CD14-positive monocyte (primary cell): ENCODE measurements at regions of chr15 and their contacts with region 1.

Region 1: GRCh38 chr15:64209680-64210334 is 47.0 kb upstream of the PPIB start:
- DNase-seq: peak in 1 of 3 donors; percentile 2
- H3K4me3 ChIP-seq: no peak overlapping the region
- H3K4me3 Mint-ChIP-seq: no peak overlapping the region
- H3K27ac ChIP-seq: no peak overlapping the region
- H3K27ac Mint-ChIP-seq: no peak overlapping the region
- H3K4me1 ChIP-seq: no peaks in the 10 kb centered on the region
- H3K4me1 Mint-ChIP-seq: no peaks in the 10 kb centered on the region
- H3K27me3 ChIP-seq: no peaks in the 10 kb centered on the region
- H3K27me3 Mint-ChIP-seq: peaks cover 0 to 2% (median 0%) of the 10 kb centered on the region in 3 donors
- CTCF ChIP-seq: peak; percentile 48

Region 2: DNA sequence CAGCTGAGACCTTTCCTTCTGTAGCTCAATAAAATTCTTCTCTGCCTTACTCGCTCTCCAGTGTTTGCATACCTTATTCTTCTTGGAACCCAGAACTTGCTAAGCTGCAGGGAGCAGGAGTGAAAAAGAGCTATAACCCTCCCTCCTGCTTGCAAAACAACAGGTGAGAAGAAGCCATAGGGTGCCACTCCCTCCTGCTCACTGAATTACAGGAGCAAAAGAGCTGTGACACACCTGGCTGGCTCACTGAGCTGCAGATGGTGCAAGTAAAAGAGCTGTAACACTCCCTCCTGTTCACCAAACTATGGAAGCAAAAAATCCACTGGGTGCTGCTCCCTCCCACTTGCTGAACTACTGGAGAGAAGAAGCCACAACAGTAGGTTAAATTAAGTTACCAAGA is 2000.5 kb before region 1 on chr15:
- intact Hi-C with region 1: no loop called
- DNase-seq: no peak
- H3K4me3 ChIP-seq: no peak overlapping the region
- H3K4me3 Mint-ChIP-seq: no peak overlapping the region
- H3K27ac ChIP-seq: no peak overlapping the region
- H3K27ac Mint-ChIP-seq: no peak overlapping the region
- H3K4me1 ChIP-seq: no peaks in the 10 kb centered on the region
- H3K4me1 Mint-ChIP-seq: no peaks in the 10 kb centered on the region
- H3K27me3 ChIP-seq: no peaks in the 10 kb centered on the region
- H3K27me3 Mint-ChIP-seq: peaks cover 0 to 1% (median 0%) of the 10 kb centered on the region in 3 donors
- CTCF ChIP-seq: no peak

Region 3: DNA sequence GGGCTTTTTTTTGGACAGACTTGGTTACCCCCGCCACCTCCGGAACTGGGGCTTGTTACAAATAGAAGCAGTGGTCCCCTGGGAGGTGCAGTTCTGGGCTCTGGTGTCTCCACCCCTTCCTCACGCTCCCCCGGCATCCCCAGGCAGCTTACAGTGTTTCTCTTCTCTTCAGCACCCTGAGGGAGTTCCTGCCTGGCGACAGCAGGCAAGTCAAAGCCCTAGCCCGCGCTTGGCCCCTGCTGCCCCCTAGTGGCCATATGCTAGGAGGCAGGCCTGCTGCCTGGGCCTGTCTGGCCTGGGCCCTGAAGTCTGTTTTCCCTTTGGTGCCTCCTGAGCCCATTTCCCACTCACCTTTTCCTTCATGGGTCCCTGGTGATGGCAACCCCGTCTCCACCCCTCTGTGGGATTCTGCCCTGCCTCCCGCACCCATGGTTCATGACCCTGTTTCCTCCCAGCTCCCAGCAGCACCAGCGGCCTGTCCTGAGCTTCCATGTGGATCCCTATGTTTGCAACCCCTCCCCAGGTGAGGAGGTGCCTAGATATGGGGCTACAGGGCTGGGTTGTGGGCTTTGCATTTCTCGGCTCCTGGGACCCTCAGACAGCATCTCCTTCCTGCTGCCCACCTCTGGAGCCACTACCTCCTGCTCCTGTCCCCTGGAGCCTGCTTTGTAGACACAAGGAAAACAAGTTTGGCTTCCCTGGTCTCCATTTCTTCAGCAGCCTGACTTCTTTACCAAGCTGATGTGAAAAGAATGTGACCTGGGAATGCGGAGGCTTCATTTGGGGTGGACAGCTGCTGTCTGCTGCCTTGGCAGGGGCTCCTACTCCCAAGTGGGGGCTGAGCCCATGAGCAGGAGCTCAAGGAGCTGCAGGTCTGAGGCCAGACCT is 56.1 kb before region 1 on chr15:
- intact Hi-C with region 1: no loop called
- DNase-seq: peak; percentile 79 to 82 (median 81)
- H3K4me3 ChIP-seq: no peak overlapping the region
- H3K4me3 Mint-ChIP-seq: peak overlapping the region; percentile 58 to 83
- H3K27ac ChIP-seq: peak overlapping the region; percentile 28 to 36
- H3K27ac Mint-ChIP-seq: peak overlapping the region in 5 of 7 donors; percentile 13 to 81 (median 53)
- H3K4me1 ChIP-seq: peaks cover 40 to 49% of the 10 kb centered on the region in 2 donors
- H3K4me1 Mint-ChIP-seq: peaks cover 41% of the 10 kb centered on the region
- H3K27me3 ChIP-seq: peaks cover 17 to 25% of the 10 kb centered on the region in 2 donors
- H3K27me3 Mint-ChIP-seq: peaks cover 24 to 34% (median 29%) of the 10 kb centered on the region in 3 donors
- CTCF ChIP-seq: peak; percentile 95

Region 4: GRCh38 chr15:64355944-64356709 is 146.3 kb after region 1 on chr15 and contains the start of gene CSNK1G1:
- intact Hi-C with region 1: loop called in 1 of 2 experiments (anchors 10 kb)
- DNase-seq: peak; percentile 88 to 95 (median 92)
- H3K4me3 ChIP-seq: peak within 1 kb of the TSS; percentile 93 to 98 (median 95)
- H3K4me3 Mint-ChIP-seq: peak within 1 kb of the TSS; percentile 96 to 97
- H3K27ac ChIP-seq: peak within 1 kb of the TSS; percentile 34 to 78
- H3K27ac Mint-ChIP-seq: peak within 1 kb of the TSS; percentile 79 to 95 (median 90)
- H3K4me1 ChIP-seq: peaks cover 9 to 13% of the 10 kb centered on the region in 2 donors
- H3K4me1 Mint-ChIP-seq: peaks cover 13% of the 10 kb centered on the region
- H3K27me3 ChIP-seq: no peaks in the 10 kb centered on the region
- H3K27me3 Mint-ChIP-seq: no peaks in the 10 kb centered on the region
- CTCF ChIP-seq: peak; percentile 56
- polyA plus RNA-seq, gene CSNK1G1: 4.3 to 8.6 (median 7.7) TPM